Common myeloid progenitor, CD34-positive (primary cell): ENCODE measurements at regions of chr12 and their contacts with region 1.

Region 1: DNA sequence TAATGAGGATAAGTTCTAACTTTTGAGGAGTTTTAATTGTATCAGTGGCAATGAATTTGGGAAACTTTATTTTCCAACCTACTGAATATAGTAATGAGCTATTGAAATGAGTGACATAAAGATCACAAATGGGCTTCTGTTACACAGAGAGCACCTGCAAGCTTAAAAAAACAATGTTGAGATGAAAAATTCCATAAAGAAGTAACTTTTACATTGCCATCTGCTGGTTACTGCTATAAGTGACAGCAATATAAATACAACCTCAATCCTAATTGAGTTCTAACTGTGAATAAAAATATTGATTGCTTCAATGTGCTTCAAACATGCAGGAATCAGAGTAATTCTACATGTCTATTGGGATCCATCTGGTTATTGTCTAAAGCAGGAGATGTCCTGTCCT is 14.2 kb downstream of the WIF1 start:
- DNase-seq: peak in 2 of 3 donors; percentile 28 to 31
- H3K4me3 ChIP-seq: no peak overlapping the region
- H3K27ac ChIP-seq: no peak overlapping the region
- H3K4me1 ChIP-seq: no peaks in the 10 kb centered on the region
- H3K27me3 ChIP-seq: peaks cover 0 to 4% (median 0%) of the 10 kb centered on the region in 5 experiments

Region 2: DNA sequence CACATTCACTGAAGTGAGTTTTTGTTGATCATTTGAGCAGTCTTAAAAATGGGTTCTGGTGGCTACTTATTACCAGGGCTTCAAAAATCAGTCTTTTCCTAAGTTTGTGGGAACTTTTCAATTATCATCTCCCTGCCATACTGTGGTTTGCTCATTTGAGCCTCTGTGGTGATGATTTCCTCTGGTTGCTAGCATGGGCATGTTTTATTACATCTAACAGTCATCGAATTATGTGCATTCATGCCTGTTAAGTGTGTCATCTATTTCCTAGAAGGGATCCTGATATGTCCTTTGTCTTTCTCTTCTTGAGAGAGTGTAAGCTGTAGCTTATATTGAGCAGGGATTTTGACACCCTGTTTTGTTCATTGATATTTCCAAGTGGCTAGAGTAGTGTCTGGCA is 102.7 kb before region 1 on chr12:
- CTCF ChIA-PET with region 1: no interaction called
- POLR2A ChIA-PET with region 1: no interaction called
- DNase-seq: no peak
- H3K4me3 ChIP-seq: no peak overlapping the region
- H3K27ac ChIP-seq: no peak overlapping the region
- H3K4me1 ChIP-seq: no peaks in the 10 kb centered on the region
- H3K27me3 ChIP-seq: peaks cover 0 to 10% (median 3%) of the 10 kb centered on the region in 5 experiments

Region 3: DNA sequence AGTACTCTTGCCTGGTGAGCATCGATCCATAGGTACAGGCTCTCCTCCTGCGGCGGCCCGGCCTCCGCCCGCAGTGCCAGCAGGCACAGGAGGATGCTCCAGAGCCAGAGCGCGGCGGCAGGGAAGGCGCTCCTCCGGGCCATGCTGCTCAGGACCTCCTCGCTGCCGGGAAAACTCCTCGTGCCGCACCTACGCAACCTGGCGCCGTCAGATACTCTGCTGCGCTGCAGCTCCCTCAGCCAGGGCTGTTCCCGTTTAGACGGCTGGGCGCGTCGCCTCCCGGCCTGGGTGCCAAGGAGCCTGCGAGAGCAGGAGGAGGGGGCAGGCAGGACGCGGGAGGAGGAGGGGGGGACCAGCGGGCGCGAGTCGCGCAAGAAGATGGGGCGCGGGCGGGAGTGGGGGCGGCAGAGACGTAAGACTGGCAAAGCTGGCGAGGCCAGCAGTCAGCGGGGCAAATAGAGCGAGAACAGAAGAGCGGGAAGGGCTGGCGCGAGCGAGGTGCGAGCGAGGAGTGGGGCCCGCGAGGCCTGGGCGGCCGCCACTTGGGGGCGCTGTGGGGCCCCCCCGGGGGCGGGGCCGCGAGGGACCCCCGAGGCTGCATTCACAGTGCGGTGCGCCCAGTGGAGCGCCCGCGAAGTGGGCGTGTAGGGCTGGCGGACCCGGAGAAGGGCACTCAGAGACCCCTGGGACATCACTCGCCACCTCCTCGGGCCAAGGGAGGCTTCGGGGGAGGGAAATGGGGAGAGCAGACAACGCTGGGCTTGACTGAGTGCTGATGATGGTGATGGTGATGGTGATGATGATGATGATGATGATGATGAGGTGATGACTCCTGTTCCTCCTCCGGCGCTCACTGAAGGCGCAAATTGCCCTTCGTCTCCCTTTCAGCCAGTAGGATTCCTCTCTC is 14.4 kb after region 1 on chr12 and contains the start of gene WIF1:
- CTCF ChIA-PET with region 1: interaction called, 15 read pairs
- POLR2A ChIA-PET with region 1: no interaction called
- DNase-seq: peak; percentile 44 to 68 (median 63)
- H3K4me3 ChIP-seq: peak within 1 kb of the TSS; percentile 27 to 63 (median 50)
- H3K27ac ChIP-seq: no peak within 1 kb of the TSS
- H3K4me1 ChIP-seq: peaks cover 0 to 30% (median 22%) of the 10 kb centered on the region in 4 experiments
- H3K27me3 ChIP-seq: peaks cover 8 to 35% (median 20%) of the 10 kb centered on the region in 5 experiments